Colonic mucosa (tissue), 4 donors: ENCODE measurements at regions of chr19 and their contacts with region 1.

Region 1: DNA sequence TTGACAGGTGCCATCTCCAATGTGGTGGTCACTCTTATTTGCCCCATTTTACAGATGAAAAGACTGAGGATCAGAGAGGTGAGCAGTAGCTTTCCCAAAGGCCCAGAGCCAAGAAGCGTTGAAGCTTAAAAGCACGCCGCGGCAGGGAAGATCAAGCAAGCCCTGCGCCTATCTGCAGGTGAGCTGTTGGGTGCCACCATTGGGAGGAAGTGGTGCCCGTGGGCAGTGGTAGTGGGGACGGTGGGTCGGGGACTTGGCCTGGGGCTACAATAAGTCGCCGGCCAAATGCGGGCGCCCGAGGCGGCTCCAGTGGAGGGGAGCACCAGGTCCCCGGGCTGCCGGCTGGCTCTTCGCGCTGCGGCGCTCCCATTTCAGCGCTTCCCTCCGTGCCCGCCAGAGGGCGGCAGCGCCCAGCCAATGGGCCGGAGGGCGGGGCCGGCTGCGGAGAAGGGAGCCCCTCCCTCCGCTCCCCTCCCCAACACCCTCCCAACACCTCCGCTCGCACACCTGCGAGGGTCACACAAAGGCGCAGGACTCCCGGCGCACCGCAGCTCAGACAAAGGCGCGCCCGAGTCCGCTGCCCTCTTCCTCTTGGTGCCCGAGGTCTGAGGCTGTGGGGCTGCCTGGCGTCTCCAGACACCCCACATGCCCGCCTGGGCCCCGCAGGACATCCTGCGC is 744 bp upstream of the POU2F2 start:
- DNase-seq: peak; percentile 69
- H3K4me3 ChIP-seq: peak overlapping the region; percentile 28
- H3K27ac ChIP-seq: peak overlapping the region; percentile 20
- H3K4me1 ChIP-seq: peaks cover 3% of the 10 kb centered on the region
- H3K27me3 ChIP-seq: peaks cover 14% of the 10 kb centered on the region
- CTCF ChIP-seq: peak; percentile 97

Region 2: GRCh38 chr19:42176990-42177685 is 44.1 kb after region 1 on chr19:
- intact Hi-C with region 1: loop called (anchors 2 kb)
- DNase-seq: peak; percentile 56
- H3K4me3 ChIP-seq: peak overlapping the region; percentile 15
- H3K27ac ChIP-seq: no peak overlapping the region
- H3K4me1 ChIP-seq: no peaks in the 10 kb centered on the region
- H3K27me3 ChIP-seq: peaks cover 44% of the 10 kb centered on the region
- CTCF ChIP-seq: peak; percentile 21

Region 3: DNA sequence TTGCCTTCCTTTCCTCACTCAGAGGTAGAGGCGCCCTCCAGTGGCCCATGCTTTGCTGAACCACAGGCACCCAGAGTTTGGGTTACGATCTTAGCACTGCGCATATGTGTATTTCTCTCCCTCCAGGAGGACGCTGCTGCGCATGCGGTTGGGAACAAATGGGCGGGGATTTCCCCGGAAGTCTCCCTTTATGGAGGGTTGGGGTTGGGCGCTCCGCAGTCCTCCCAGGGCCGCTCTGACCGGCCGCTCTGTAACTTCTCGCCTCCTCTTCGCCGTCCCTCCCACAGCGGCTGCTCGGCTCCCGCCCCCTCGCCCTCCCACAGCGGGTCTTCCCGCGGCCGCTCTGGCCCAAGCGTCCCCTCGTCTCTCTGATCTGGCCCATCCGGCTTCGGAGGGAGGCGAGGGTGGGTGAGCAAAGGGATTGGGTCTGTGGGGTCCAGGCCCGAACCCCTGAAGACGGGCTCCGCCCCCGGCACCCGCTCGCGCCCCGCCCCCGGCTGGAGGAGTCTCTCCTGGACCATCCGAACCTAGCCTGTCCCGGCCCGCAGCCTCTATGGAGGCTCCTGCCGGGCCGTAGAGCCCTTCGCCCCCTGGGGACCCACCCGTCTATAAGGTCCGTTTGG is 192.4 kb after region 1 on chr19 and contains the start of gene MEGF8:
- intact Hi-C with region 1: loop called (anchors 10 kb)
- DNase-seq: peak; percentile 99
- H3K4me3 ChIP-seq: peak within 1 kb of the TSS; percentile 94
- H3K27ac ChIP-seq: peak within 1 kb of the TSS; percentile 63
- H3K4me1 ChIP-seq: peaks cover 4% of the 10 kb centered on the region
- H3K27me3 ChIP-seq: peaks cover 20% of the 10 kb centered on the region
- CTCF ChIP-seq: peak; percentile 80
- total RNA-seq, gene MEGF8: 13.4 to 16.5 TPM